OCI-LY7 (cell line): ENCODE measurements at regions of chr6 and their contacts with region 1.

Region 1: GRCh38 chr6:140076105-140076504 is 701.7 kb upstream of the CITED2 start:
- DNase-seq: no peak
- H3K4me3 ChIP-seq: no peak overlapping the region
- H3K27ac ChIP-seq: no peak overlapping the region
- H3K4me1 ChIP-seq: no peaks in the 10 kb centered on the region
- CTCF ChIP-seq: no peak

Region 2: GRCh38 chr6:140101367-140101766 is 25.3 kb after region 1 on chr6:
- CTCF ChIA-PET with region 1: no interaction called
- POLR2A ChIA-PET with region 1: no interaction called
- intact Hi-C with region 1: loop called (anchors 1 kb)
- DNase-seq: no peak
- H3K4me3 ChIP-seq: no peak overlapping the region
- H3K27ac ChIP-seq: no peak overlapping the region
- H3K4me1 ChIP-seq: no peaks in the 10 kb centered on the region
- CTCF ChIP-seq: no peak